Motor neuron (in vitro differentiated cells): ENCODE measurements at regions of chr9 and their contacts with region 1.

Region 1: DNA sequence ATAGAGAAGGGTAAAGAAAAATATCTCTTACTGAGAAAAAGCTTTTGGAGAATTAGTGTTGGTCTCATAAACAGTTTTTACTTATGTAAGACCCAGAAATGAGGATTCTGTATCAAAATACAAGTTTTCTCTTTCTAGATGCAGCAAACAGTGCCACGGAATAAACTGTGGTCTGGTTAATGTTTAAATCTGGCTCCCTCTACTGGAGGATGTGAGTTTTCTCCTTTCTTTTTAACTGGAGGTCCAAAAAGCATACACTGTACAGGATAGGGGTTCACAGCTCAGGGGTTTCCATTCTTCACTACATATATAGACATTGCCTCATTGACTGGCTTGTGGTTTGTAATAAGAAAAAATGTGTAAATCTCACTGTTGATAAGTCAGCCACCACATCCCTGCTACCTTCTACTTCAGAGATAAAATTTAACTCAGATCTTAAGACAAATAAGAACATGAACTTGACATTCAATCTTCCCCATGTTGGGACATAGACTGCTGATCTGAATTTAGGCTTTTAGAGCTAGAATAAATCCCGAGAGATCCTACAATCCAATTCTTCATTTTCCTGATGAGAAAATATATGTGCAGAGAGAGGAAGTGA is 98.9 kb downstream of the CFAP95 start:
- ATAC-seq: peak; percentile 60 to 90 (median 83)
- H3K4me3 ChIP-seq: no peak overlapping the region
- H3K27ac ChIP-seq: no peak overlapping the region
- H3K4me1 ChIP-seq: no peaks in the 10 kb centered on the region

Region 2: DNA sequence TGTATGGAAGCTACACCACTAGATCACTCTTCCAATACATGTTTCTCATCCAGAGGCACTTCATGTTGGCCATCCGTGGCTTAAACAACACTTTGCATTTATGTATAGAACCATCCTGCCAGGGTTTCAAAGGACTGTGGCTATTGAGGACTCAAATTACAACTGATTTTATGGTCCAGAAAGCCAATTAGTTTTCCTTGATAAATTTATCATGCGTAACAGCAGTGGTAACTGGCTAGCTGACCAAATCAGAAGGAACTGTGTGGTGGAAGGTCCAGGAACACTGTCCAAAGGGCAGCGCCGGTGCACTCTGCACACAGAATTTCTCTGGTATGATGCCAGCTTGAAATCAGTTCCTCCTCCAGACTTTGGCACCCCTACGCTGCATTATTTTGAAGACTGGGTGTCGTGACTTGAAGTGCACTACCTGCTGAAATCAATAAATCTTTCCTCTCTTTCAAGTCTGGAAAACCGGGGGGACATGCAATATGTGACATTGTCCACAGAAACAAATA is 1309.6 kb before region 1 on chr9:
- in situ Hi-C with region 1: no loop called
- ATAC-seq: no peak
- H3K4me3 ChIP-seq: no peak overlapping the region
- H3K27ac ChIP-seq: no peak overlapping the region
- H3K4me1 ChIP-seq: no peaks in the 10 kb centered on the region

Region 3: GRCh38 chr9:69421908-69422801 is 497.4 kb before region 1 on chr9:
- in situ Hi-C with region 1: loop called in 3 of 9 experiments (anchors 25 kb)
- ATAC-seq: peak; percentile 61 to 80 (median 68)
- H3K4me3 ChIP-seq: no peak overlapping the region
- H3K27ac ChIP-seq: no peak overlapping the region
- H3K4me1 ChIP-seq: peaks cover 0 to 2% of the 10 kb centered on the region in 2 donors

Region 4: DNA sequence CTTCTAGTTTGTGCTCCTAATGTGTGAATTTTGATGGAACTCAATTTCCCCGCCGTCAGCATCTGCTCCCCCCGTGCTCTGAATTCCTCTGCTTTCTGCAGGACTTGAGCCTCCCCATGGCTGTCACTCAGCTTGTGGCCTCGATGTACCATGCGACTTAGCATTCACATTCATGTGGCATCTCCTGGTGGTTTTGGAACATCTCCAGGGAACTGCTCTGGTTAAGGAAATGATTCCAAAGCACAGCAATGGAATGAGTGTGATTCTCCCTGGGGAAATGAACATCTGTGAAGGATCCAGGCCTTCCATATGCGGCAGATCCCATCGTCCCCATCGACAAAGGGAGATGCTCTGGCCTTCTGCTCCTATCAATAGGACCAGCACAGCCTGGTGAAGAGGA is 475.5 kb before region 1 on chr9:
- in situ Hi-C with region 1: loop called in 1 of 9 experiments (anchors 25 kb)
- ATAC-seq: peak in 1 of 8 experiments; percentile 22
- H3K4me3 ChIP-seq: no peak overlapping the region
- H3K27ac ChIP-seq: no peak overlapping the region
- H3K4me1 ChIP-seq: peaks cover 0 to 5% of the 10 kb centered on the region in 2 donors

Region 5: DNA sequence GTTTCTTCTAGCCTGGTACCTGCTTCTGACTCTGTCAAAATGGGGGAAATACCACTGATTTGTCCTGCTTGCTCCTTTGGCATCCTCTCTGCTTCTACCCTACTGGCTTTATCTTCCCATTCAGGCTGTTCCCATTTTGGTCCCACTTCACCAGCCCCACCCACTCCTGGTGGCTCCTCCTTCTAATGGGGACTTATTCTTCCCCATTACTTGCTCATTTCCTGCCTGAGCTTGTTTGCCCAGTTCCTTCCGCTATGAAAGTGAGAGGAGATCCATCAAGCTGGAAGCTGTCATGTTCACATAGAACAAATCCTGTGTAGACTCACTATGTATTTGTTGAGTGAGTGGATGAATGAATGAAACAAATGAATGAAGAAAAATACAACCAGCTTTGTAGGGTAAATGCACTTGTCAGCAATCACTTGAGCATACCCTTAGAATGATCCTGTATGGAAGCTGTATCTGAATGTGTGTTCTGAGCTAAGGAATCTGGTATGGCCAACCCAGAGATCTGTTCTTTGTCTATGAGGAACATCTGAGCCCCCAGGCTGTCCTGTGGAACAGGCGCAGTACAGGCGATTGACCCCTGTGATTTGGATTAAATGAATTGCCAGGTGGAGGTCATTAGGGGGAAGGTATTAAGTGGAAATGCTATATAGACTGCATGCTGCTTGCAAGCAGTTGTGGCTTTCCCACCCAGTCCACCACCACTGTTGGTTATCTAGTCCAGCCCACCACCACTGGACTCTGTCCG is 336.8 kb before region 1 on chr9:
- in situ Hi-C with region 1: loop called in 1 of 9 experiments (anchors 25 kb)
- ATAC-seq: no peak
- H3K4me3 ChIP-seq: no peak overlapping the region
- H3K27ac ChIP-seq: no peak overlapping the region
- H3K4me1 ChIP-seq: peaks cover 4 to 5% of the 10 kb centered on the region in 2 donors